Activated CD8-positive, alpha-beta T cell treated with anti-CD3 and anti-CD28 coated beads for 36 hours (primary cell): ENCODE measurements at regions of chr10 and their contacts with region 1.

Region 1: GRCh38 chr10:6766131-6766801 is 186.2 kb upstream of the PRKCQ start:
- DNase-seq: no peak
- ATAC-seq: no peak
- H3K4me3 Mint-ChIP-seq: no peak overlapping the region
- H3K27ac Mint-ChIP-seq: no peak overlapping the region
- H3K4me1 Mint-ChIP-seq: no peaks in the 10 kb centered on the region
- H3K27me3 Mint-ChIP-seq: peaks cover 22% of the 10 kb centered on the region
- CTCF ChIP-seq: no peak

Region 2: GRCh38 chr10:6719561-6719960 is 46.7 kb before region 1 on chr10:
- CTCF ChIA-PET with region 1: no interaction called
- POLR2A ChIA-PET with region 1: no interaction called
- intact Hi-C with region 1: loop called (anchors 2 kb)
- DNase-seq: no peak
- ATAC-seq: no peak
- H3K4me3 Mint-ChIP-seq: no peak overlapping the region
- H3K27ac Mint-ChIP-seq: no peak overlapping the region
- H3K4me1 Mint-ChIP-seq: peaks cover 6% of the 10 kb centered on the region
- H3K27me3 Mint-ChIP-seq: peaks cover 42% of the 10 kb centered on the region
- CTCF ChIP-seq: no peak